Body of pancreas (tissue), 4 donors: ENCODE measurements at regions of chr17 and their contacts with region 1.

Region 1: DNA sequence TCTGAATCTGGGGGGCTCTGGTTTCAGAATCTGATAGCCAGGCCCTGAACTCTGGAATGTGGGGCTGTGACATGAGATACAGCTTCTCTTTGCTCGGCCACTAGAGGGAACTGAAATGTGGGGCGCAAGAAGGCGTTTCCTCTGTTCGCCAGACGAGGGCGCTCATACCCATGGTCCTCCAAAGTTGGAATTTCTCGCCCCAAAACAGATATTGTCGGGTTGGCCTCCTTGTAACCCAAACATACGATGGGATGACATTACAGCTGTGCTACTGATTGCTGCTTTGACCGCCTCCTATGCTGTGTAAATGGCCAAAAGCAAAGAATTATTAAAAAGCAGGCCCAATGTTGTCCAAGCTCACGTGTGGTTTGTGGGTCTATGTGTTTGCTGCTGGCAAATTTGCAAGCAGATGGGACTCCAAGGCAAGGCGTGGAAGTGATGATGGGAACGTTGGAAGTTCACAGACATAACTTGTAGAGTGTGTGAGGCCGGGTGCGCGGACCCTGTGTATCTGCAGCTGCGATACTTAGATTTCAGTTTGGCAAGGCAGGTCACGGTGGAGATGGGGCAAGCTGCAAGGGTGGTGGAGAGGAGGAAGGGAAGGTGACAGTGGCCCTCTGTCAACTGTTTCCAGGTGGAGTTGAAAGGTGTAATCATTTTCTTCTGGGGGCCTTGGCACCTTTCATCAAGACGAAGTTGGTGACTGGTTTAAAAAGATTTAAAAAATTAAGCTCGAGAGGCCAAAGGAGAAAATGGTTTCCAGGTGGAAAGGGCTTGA is 13.0 kb upstream of the MSI2 start:
- DNase-seq: peak; percentile 66 to 73 (median 70)
- ATAC-seq: peak; percentile 77
- H3K4me3 ChIP-seq: no peak overlapping the region
- H3K27ac ChIP-seq: no peak overlapping the region
- H3K4me1 ChIP-seq: no peaks in the 10 kb centered on the region
- H3K27me3 ChIP-seq: no peaks in the 10 kb centered on the region
- CTCF ChIP-seq: peak; percentile 97 to 100 (median 99)
- POLR2A ChIP-seq: no peak

Region 2: DNA sequence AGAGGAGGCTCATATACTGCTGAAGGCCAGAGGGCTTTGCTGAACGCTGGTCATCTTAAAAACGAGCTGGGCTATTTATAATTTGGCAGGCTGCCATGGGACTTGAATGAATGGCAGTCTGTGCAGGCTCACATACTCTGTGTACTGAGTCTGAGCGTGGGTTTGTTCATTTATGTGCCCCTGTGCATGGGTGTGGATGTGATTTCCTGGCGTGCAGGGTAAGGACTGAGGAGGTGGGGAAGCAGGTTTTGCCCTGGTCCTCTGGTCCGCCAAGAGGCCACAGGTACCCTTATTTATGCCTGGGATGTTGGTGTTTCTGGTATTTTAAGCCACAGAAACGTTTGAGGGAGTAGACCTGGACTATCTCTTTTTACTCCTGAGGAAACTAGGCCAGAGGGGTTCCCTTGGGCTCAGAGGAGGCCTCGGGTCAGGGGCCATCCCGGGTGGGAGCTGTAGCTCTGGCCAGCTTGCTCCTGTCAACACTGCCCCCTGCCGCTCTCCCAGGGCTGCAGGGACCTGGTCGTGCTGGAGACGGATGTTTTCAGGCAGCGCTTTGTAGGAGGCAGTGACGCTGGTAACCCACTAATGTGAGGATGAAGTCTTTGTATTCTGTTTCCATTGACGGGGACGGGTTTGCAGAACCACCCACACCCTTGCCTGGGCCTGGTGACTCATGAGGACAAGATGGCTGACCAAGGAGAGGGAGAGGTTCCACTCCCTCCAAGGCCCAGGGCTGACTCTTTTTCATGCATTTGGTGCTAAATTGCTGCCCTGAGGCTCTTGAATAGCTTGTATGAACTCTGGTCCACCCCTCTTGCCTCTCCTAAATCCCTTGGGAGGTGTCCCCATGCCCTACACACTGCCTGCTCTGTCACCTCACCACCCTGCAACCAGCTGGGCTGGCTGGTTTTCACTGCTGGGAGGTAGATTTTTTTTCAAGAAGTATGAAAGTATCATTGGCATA is 197.4 kb after region 1 on chr17:
- intact Hi-C with region 1: no loop called
- DNase-seq: peak; percentile 35 to 69 (median 58)
- ATAC-seq: peak; percentile 65
- H3K4me3 ChIP-seq: no peak overlapping the region
- H3K27ac ChIP-seq: peak overlapping the region in 2 of 4 donors; percentile 55 to 59
- H3K4me1 ChIP-seq: peaks cover 22% of the 10 kb centered on the region
- H3K27me3 ChIP-seq: no peaks in the 10 kb centered on the region
- CTCF ChIP-seq: peak in 3 of 7 experiments; percentile 4 to 21 (median 20)
- POLR2A ChIP-seq: no peak

Region 3: DNA sequence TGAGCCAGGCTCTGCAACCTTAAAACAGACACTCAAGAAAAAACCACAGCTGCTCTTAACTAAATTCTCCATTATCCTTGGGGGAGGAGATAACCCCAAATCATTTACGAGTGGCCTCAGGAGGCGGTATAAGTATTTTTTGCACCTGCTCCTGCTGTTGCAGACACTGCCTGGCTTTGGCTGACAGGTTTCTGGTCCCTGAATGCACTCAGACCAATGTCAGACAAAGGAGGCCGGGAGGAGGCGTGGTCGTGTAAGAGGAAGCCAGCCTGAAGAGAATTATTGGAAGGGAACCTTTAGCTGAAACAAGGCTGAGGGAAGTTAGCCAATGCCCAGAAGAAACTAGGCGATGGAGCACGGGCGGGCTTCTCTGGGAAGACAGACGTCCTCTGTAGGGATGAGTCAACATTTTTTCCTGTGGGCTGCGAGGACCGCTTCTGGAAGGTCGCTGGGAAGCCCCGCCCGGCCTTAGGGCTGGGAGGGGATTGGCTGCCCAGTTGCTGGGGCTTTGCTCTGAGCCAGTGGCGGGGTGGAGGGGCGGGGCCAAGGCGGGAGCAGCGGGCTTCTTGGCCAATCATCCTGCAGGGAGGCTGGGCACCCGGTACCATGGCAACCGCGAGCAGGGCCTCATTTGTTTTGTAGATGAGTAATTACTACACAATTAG is 419.4 kb after region 1 on chr17:
- intact Hi-C with region 1: loop called (anchors 10 kb)
- DNase-seq: peak; percentile 89 to 95 (median 94)
- ATAC-seq: peak; percentile 95
- H3K4me3 ChIP-seq: no peak overlapping the region
- H3K27ac ChIP-seq: peak overlapping the region in 3 of 4 donors; percentile 17 to 73 (median 68)
- H3K4me1 ChIP-seq: peaks cover 15% of the 10 kb centered on the region
- H3K27me3 ChIP-seq: no peaks in the 10 kb centered on the region
- CTCF ChIP-seq: peak in 4 of 7 experiments; percentile 5 to 13 (median 10)
- POLR2A ChIP-seq: no peak

Region 4: GRCh38 chr17:57747221-57748017 is 504.1 kb after region 1 on chr17:
- intact Hi-C with region 1: loop called (anchors 5 kb)
- DNase-seq: peak; percentile 35 to 56 (median 56)
- ATAC-seq: peak; percentile 73
- H3K4me3 ChIP-seq: no peak overlapping the region
- H3K27ac ChIP-seq: no peak overlapping the region
- H3K4me1 ChIP-seq: peaks cover 10% of the 10 kb centered on the region
- H3K27me3 ChIP-seq: no peaks in the 10 kb centered on the region
- CTCF ChIP-seq: peak in 6 of 7 experiments; percentile 54 to 72 (median 66)
- POLR2A ChIP-seq: no peak

Region 5: GRCh38 chr17:57833179-57833939 is 590.0 kb after region 1 on chr17:
- intact Hi-C with region 1: loop called (anchors 10 kb)
- DNase-seq: peak; percentile 71 to 78 (median 73)
- ATAC-seq: peak; percentile 78
- H3K4me3 ChIP-seq: no peak overlapping the region
- H3K27ac ChIP-seq: peak overlapping the region in 1 of 4 donors; percentile 13
- H3K4me1 ChIP-seq: peaks cover 17% of the 10 kb centered on the region
- H3K27me3 ChIP-seq: no peaks in the 10 kb centered on the region
- CTCF ChIP-seq: peak; percentile 82 to 94 (median 87)
- POLR2A ChIP-seq: no peak